Activated T-helper 1 cell treated with anti-CD3 and anti-CD28 coated beads, Interleukin-12 subunit alpha, Interleukin-12 subunit beta, Interleukin-2, Interleukin-4 antibody, amounts not matched to agents 30 ng/mL and 10 ng/mL and 1 ng/mL, durations not matched to agents 14 hours and 24 hours and 36 hours (primary cell): ENCODE measurements at regions of chr18 and their contacts with region 1.

Region 1: GRCh38 chr18:3593904-3594661 is 144.1 kb downstream of the TGIF1 start:
- DNase-seq: peak; percentile 83
- H3K4me3 Mint-ChIP-seq: peak overlapping the region; percentile 89
- H3K27ac Mint-ChIP-seq: peak overlapping the region; percentile 98
- H3K4me1 Mint-ChIP-seq: peaks cover 63% of the 10 kb centered on the region
- H3K27me3 Mint-ChIP-seq: no peaks in the 10 kb centered on the region

Region 2: DNA sequence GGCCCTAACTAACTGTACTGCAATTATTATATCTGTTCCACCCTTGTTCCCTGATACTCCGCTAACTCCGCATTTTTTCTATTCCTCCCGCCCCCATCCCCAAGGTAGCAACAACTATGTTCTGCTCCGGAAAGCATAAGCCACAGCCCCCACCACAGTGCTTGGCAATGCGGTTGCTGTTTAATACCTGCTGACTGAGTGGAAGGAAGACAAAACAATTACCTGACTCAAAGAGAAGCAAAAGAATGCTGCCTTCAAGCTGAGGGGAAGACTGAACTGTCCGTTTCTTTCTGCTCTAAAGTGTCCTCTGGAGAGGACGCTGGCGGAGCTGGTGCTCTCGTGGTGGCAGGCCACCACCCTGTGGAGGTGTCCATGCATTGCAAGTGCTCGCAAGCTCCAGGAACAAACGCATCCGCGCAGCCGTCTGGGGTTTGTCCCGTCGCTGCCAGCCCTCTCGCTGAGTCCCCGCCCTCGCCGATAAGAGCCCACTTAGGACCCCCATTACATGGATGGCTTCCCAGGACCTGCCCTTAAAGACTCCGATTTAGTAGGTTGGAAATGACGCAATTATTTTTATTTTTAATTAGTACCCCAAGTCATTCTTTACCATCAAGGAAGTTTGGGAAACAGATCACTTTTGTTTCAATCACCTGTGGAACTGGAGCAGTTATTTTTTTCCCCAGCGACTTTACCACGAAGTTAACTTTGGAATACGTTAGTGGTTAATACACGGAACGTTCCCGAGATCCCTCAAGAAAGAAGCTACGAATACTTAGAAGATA is 348.0 kb before region 1 on chr18:
- intact Hi-C with region 1: loop called (anchors 1 kb)
- DNase-seq: peak; percentile 79
- H3K4me3 Mint-ChIP-seq: peak overlapping the region; percentile 93
- H3K27ac Mint-ChIP-seq: peak overlapping the region; percentile 99
- H3K4me1 Mint-ChIP-seq: peaks cover 42% of the 10 kb centered on the region
- H3K27me3 Mint-ChIP-seq: peaks cover 2% of the 10 kb centered on the region

Region 3: GRCh38 chr18:3297025-3297984 is 296.8 kb before region 1 on chr18:
- intact Hi-C with region 1: loop called (anchors 1 kb)
- DNase-seq: peak; percentile 89
- H3K4me3 Mint-ChIP-seq: peak overlapping the region; percentile 91
- H3K27ac Mint-ChIP-seq: peak overlapping the region; percentile 82
- H3K4me1 Mint-ChIP-seq: peaks cover 15% of the 10 kb centered on the region
- H3K27me3 Mint-ChIP-seq: peaks cover 33% of the 10 kb centered on the region

Region 4: DNA sequence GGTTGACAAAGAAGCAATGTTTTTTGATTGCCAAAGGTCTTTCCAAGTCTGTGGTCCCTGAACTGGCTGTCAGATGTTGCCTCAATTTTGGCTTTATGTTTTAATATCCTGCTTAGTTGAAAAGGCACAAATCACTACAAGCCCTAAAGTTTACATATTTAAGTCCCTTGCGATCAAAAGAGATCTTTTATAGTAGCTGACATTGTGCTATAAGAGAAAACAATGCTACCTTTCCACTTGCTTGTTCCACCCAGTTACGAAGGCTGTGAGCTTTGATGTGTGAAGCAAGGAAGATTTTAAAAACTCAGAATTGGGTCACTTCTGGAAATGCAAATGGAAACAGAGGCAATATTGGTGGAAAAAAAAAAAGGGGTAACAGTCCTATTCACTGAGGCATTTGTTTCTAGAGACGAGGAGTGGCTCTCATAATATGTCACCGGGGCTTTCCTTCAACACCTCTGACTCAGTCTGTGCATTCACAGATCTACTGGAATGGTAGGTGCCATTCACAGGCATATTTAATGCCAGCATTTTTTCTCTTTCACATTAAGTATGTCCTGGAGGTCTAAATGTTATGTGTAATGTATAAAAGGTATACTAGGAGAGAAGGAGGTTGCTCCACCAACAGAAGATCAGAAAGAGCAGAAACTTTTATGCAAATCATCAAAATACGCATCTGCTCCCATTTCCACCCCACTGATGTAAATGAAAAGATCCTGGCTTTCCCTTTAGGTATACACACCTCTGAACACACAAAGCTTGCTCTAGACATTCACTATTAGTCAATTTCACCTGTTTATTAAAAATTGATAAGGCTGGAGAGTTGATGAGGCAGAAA is 52.3 kb before region 1 on chr18:
- intact Hi-C with region 1: loop called (anchors 2 kb)
- DNase-seq: no peak
- H3K4me3 Mint-ChIP-seq: peak overlapping the region; percentile 34
- H3K27ac Mint-ChIP-seq: peak overlapping the region; percentile 77
- H3K4me1 Mint-ChIP-seq: peaks cover 12% of the 10 kb centered on the region
- H3K27me3 Mint-ChIP-seq: peaks cover 10% of the 10 kb centered on the region

Region 5: GRCh38 chr18:3634250-3634939 is 40.3 kb after region 1 on chr18:
- intact Hi-C with region 1: loop called (anchors 2 kb)
- DNase-seq: no peak
- H3K4me3 Mint-ChIP-seq: no peak overlapping the region
- H3K27ac Mint-ChIP-seq: peak overlapping the region; percentile 62
- H3K4me1 Mint-ChIP-seq: peaks cover 22% of the 10 kb centered on the region
- H3K27me3 Mint-ChIP-seq: no peaks in the 10 kb centered on the region

Region 6: GRCh38 chr18:3665780-3666525 is 71.9 kb after region 1 on chr18:
- intact Hi-C with region 1: loop called (anchors 1 kb)
- DNase-seq: peak; percentile 59
- H3K4me3 Mint-ChIP-seq: peak overlapping the region; percentile 57
- H3K27ac Mint-ChIP-seq: no peak overlapping the region
- H3K4me1 Mint-ChIP-seq: peaks cover 42% of the 10 kb centered on the region
- H3K27me3 Mint-ChIP-seq: peaks cover 5% of the 10 kb centered on the region